ENCODE measurements at regions of chr3 and their contacts with region 1.

Region 1: GRCh38 chr3:105845488-105845887 is 23.3 kb downstream of the CBLB start:
- DNase-seq: no peak
- ATAC-seq: no peak
- H3K4me3 ChIP-seq: no peak overlapping the region
- H3K4me3 Mint-ChIP-seq: peak overlapping the region in 6 of 10 donors; percentile 11 to 46 (median 26)
- H3K27ac ChIP-seq: no peak overlapping the region
- H3K27ac Mint-ChIP-seq: peak overlapping the region in 5 of 9 donors; percentile 22 to 42 (median 26)
- H3K4me1 ChIP-seq: peaks cover 17 to 32% of the 10 kb centered on the region in 2 donors
- H3K4me1 Mint-ChIP-seq: peaks cover 16 to 75% (median 51%) of the 10 kb centered on the region in 7 donors
- H3K27me3 ChIP-seq: no peaks in the 10 kb centered on the region
- H3K27me3 Mint-ChIP-seq: no peaks in the 10 kb centered on the region

Region 2: DNA sequence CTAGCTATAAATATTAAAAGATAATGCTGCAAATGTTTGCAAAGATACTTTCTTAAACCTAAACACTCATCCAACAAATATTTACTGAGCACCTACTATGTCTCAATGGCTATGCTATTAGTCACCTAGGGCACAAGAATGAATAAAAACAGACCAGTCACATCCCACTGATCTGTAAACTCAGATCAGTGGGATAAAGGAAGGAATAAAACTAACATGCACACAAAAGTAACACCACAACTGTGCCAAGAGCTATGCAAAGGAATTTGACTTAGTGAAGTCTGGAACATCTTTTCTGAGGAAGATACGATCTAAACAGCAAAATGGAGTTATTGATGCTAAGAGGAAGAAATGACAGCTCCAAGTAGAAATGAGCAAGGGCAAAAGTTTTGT is 33.3 kb before region 1 on chr3:
- CTCF ChIA-PET with region 1: no interaction called
- POLR2A ChIA-PET with region 1: no interaction called
- intact Hi-C with region 1: loop called in 1 of 2 experiments (anchors 5 kb)
- DNase-seq: no peak
- ATAC-seq: no peak
- H3K4me3 ChIP-seq: no peak overlapping the region
- H3K4me3 Mint-ChIP-seq: peak overlapping the region in 2 of 10 donors; percentile 2 to 14
- H3K27ac ChIP-seq: no peak overlapping the region
- H3K27ac Mint-ChIP-seq: peak overlapping the region in 5 of 9 donors; percentile 3 to 38 (median 10)
- H3K4me1 ChIP-seq: peaks cover under 1 to 7% of the 10 kb centered on the region in 2 donors
- H3K4me1 Mint-ChIP-seq: peaks cover 42 to 83% (median 68%) of the 10 kb centered on the region in 7 donors
- H3K27me3 ChIP-seq: no peaks in the 10 kb centered on the region
- H3K27me3 Mint-ChIP-seq: no peaks in the 10 kb centered on the region

Region 3: DNA sequence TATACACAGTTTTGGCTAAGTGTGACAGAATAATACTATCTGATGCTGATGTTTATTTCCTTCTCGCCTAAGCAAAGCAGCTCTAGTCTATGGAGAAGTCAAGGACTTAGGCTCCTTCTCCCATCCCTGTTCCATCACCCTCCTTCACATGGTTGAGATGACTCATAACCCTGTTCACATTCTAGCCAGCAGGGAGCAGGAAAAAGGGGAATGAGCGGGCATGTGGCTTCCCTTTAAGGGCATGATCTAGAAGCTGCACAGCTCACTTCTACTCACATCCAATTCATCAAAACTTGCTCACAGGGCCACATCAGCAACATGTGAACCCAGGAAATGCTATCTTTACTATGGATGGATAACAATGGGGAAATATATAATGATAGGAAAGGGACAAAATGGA is 17.5 kb before region 1 on chr3:
- CTCF ChIA-PET with region 1: no interaction called
- POLR2A ChIA-PET with region 1: interaction called, 4 read pairs
- intact Hi-C with region 1: loop called (anchors 2 kb)
- DNase-seq: no peak
- ATAC-seq: no peak
- H3K4me3 ChIP-seq: no peak overlapping the region
- H3K4me3 Mint-ChIP-seq: peak overlapping the region in 4 of 10 donors; percentile 29 to 52 (median 40)
- H3K27ac ChIP-seq: no peak overlapping the region
- H3K27ac Mint-ChIP-seq: peak overlapping the region in 4 of 9 donors; percentile 1 to 90 (median 20)
- H3K4me1 ChIP-seq: peaks cover 37 to 65% of the 10 kb centered on the region in 2 donors
- H3K4me1 Mint-ChIP-seq: peaks cover 57 to 92% (median 88%) of the 10 kb centered on the region in 7 donors
- H3K27me3 ChIP-seq: no peaks in the 10 kb centered on the region
- H3K27me3 Mint-ChIP-seq: no peaks in the 10 kb centered on the region

Region 4: DNA sequence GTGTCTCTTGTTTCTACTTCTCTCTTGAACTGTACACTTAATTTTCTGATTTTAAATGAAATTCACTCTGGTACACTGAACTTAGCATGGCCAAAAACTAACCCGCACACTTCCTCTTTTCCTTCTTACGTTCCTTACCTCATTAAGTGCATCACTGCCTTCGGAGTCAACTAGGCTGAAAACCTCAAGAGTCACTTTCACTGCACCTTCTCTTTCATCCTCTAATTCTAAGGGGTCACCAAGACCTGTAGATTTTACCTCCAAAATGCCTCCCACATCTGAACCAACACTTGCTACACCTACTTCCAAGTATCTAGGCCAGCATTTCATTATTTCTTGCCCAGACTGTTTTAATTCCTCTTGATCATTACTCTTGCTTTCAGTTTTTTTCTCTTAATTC is 16.7 kb after region 1 on chr3:
- CTCF ChIA-PET with region 1: no interaction called
- POLR2A ChIA-PET with region 1: interaction called, 4 read pairs
- intact Hi-C with region 1: loop called (anchors 1 to 2 kb)
- DNase-seq: peak in 3 of 9 donors; percentile 8 to 26 (median 20)
- ATAC-seq: peak; percentile 60
- H3K4me3 ChIP-seq: peak overlapping the region; percentile 26
- H3K4me3 Mint-ChIP-seq: no peak overlapping the region
- H3K27ac ChIP-seq: no peak overlapping the region
- H3K27ac Mint-ChIP-seq: no peak overlapping the region
- H3K4me1 ChIP-seq: peaks cover 31 to 68% of the 10 kb centered on the region in 2 donors
- H3K4me1 Mint-ChIP-seq: peaks cover 23 to 61% (median 55%) of the 10 kb centered on the region in 7 donors
- H3K27me3 ChIP-seq: no peaks in the 10 kb centered on the region
- H3K27me3 Mint-ChIP-seq: no peaks in the 10 kb centered on the region

Region 5: DNA sequence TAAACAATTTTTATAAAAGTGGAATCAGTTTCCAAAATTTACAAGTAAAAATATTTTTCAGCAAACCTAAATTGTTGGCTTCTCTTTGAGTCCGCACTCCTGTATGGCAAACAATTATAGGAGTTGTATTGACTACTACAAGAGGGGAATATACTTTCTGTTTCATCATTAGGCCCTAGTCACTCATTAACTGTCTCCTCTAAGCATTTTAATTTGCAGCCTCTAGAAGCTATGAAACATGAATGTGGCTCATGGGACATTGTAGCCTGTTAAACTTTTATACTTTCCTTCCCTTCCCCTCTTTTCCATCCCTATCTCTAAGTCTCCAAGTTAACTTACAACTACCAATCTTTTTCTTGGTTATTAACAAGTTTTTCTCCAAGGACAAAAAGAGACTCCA is 82.3 kb after region 1 on chr3:
- CTCF ChIA-PET with region 1: no interaction called
- POLR2A ChIA-PET with region 1: no interaction called
- intact Hi-C with region 1: no loop called
- DNase-seq: no peak
- ATAC-seq: no peak
- H3K4me3 ChIP-seq: no peak overlapping the region
- H3K4me3 Mint-ChIP-seq: no peak overlapping the region
- H3K27ac ChIP-seq: no peak overlapping the region
- H3K27ac Mint-ChIP-seq: no peak overlapping the region
- H3K4me1 ChIP-seq: no peaks in the 10 kb centered on the region
- H3K4me1 Mint-ChIP-seq: peaks cover 0 to 5% (median 0%) of the 10 kb centered on the region in 7 donors
- H3K27me3 ChIP-seq: no peaks in the 10 kb centered on the region
- H3K27me3 Mint-ChIP-seq: no peaks in the 10 kb centered on the region